AG04449 (cell line): ENCODE measurements at regions of chr12 and their contacts with region 1.

Region 1: DNA sequence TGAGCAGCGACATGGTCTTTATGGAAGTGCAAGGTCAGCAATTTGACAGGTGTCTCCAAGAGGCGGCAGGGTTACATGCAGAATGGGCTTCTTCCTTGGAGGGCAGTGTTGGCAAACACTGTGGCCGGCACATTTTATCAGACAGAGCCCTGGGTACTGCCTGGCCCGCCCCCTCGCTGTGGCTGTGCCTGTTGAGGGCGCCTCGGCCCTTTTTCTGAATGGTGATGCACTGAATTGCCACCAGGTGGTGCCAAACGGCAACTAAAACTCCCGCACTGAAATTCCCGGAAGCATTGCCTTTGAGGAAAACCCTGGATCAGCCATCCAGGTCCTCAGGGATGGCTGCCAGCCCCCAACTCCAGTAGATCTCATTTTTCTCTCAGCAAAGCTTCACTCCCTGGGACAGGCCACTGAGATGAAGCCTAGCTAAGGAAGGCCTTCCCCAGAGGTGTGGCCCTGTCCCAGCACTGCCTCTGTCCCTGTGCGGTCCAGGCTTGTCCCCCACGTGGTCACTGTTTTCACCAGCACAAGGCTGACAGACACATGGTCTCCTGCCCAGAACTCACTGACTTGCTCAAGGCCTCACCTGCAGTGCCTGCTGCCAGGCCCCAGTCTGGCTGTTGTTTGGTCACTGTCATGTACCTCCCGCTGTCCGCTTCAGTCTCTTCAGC is 73.6 kb downstream of the TESC start:
- DNase-seq: no peak
- H3K4me3 ChIP-seq: no peak overlapping the region
- CTCF ChIP-seq: peak; percentile 83

Region 2: GRCh38 chr12:116708826-116709756 is 316.5 kb before region 1 on chr12:
- CTCF ChIA-PET with region 1: no interaction called
- POLR2A ChIA-PET with region 1: no interaction called
- DNase-seq: no peak
- H3K4me3 ChIP-seq: peak overlapping the region; percentile 31
- CTCF ChIP-seq: peak; percentile 70

Region 3: DNA sequence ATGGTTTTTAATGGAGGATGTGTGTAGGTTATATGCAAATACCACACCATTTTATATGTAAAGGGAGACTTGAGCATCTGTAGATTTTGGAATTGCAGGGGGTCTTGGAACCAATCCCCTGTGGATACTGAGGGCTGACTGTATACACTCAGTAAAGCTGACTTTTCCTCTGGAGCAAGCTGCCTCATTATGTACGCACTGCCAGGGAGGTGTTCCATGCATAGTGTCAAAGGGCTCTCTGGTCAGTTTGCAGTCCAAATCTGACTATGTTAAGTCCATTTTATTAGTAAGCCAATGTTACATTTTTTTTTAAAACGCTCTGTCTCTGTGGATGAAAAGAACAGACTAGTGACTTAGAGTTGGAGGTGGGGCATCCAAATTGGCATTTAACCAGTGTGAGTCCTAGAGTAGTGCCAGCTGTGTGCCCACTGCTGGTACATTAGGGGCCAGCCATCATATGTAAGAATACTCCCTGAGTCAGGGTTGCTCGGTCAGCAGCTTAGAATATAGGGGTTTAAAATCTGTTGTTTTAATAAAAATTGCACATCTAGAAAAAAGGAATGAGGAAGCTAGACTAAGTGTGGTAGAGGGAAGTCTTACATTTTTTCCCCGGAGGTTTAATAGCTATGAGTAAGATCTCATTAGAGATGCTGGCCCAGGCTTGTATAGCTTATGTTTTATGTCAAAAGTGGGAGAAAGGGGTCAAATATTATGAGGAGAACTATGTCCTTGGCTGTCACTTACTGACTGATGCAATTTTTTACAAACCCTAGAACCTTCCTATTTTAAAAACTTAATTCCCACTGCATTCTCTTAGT is 13.4 kb before region 1 on chr12:
- CTCF ChIA-PET with region 1: interaction called, 62 read pairs
- POLR2A ChIA-PET with region 1: no interaction called
- DNase-seq: peak; percentile 50
- H3K4me3 ChIP-seq: no peak overlapping the region
- CTCF ChIP-seq: no peak

Region 4: DNA sequence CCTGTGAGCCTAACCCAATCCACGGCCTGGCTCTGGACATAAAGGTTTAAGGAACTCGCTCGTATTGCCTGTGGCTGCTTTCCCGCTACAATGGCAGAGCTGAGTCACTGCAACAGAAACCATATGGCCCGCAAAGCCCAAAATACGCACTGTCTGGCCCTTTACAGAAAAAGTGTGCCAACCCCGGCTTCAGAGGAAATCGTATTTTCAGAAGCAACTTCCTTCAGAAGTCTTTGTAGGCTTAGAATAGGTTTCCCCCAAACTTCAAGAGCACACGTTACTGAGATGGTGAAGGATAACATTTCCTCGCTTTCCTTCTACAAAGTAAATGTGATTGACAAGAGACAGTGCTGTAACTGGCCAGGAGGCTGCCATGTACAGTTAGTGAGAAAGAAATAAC is 108.4 kb after region 1 on chr12:
- CTCF ChIA-PET with region 1: interaction called, 13 read pairs
- POLR2A ChIA-PET with region 1: no interaction called
- DNase-seq: no peak
- H3K4me3 ChIP-seq: no peak overlapping the region
- CTCF ChIP-seq: no peak

Region 5: DNA sequence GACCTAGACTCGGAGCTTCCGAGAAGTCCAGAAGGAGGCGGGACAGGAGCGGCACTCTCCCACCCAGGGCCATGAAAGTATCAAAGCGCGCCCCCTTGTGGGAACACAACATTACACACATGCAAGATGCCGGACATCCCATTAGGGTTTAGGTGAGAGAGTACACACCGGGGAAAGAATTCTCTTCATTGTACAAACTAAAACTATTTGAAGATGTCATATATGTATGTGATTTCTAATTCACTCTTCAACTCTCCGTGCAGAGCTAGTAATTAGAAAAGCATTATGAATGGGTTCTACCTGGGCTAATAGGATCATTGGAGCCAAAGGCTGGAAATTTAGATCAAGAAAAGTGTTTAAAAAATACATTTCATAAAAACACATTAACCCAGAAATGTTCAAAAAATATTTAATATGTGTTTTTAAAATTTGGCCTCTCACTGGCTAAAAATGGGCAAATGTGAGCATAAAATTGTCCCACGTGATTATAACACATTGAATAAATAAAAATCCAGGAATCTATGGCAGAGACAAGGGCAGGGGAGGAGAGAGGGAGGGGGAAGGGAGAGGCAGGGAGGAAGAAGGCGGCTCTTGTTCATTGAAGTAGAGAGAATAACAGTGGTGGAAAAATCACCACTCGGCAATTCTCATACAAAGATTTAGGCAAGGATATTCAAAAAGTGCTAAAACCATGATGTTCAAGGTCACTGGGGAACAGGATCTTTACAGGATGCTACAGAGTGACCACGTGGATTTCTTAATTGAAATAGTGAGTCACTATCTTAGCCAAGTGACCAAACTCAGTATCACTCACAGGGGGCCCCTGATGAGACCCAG is 125.8 kb after region 1 on chr12:
- CTCF ChIA-PET with region 1: interaction called, 27 read pairs
- POLR2A ChIA-PET with region 1: no interaction called
- DNase-seq: no peak
- H3K4me3 ChIP-seq: no peak overlapping the region
- CTCF ChIP-seq: peak; percentile 55